Breast epithelium (tissue), 4 donors: ENCODE measurements at regions of chr2 and their contacts with region 1.

Region 1: DNA sequence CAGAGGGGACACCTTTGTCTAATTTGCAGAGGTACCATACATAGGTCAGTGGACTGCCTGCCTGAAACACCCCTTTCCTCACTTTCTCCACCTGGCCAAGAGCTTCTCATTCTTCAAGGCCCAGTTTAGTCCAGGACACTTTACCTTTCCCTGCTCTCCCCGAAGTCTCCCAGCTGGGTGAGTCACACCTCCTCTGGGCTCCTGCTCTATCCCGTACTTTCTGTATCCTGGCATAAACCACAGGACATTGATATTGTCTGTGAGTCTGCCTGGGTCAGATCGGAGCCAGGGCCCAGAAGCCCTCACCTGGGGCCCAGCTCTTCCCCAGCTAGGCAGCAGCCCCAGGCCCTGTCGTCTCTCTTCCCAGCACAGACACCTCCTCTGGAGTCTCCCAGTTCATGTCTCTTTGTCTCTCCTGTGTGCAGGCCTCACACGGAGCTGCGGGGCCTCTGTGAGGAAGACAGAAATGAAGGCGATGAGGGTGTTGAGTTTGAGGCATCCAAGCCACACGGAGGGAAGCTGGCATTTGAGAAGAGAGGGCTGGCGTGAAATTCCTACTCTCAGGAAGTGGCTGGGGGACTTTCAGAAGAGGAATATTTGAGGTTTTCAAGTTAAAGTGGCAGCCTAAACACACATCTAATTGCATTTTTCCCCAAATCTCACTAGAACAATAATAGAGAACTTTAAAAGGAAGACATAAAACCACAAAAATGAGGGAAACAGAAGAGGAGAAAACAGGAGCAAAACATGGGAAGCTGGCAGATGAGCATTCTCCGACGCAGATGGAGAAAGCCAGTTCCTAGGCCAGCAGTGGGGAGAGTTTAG is 79.6 kb upstream of the LAPTM4A start:
- DNase-seq: no peak
- H3K4me3 ChIP-seq: no peak overlapping the region
- H3K27ac ChIP-seq: peak overlapping the region; percentile 16 to 20
- H3K4me1 ChIP-seq: no peaks in the 10 kb centered on the region
- H3K27me3 ChIP-seq: no peaks in the 10 kb centered on the region
- CTCF ChIP-seq: no peak
- POLR2A ChIP-seq: no peak

Region 2: GRCh38 chr2:20218953-20219540 is 88.0 kb after region 1 on chr2:
- intact Hi-C with region 1: loop called (anchors 2 kb)
- DNase-seq: no peak
- H3K4me3 ChIP-seq: no peak overlapping the region
- H3K27ac ChIP-seq: peak overlapping the region in 1 of 2 donors; percentile 94
- H3K4me1 ChIP-seq: peaks cover 9 to 22% of the 10 kb centered on the region in 2 donors
- H3K27me3 ChIP-seq: no peaks in the 10 kb centered on the region
- CTCF ChIP-seq: no peak
- POLR2A ChIP-seq: no peak